ENCODE measurements at regions of chr9 and their contacts with region 1.

Region 1: DNA sequence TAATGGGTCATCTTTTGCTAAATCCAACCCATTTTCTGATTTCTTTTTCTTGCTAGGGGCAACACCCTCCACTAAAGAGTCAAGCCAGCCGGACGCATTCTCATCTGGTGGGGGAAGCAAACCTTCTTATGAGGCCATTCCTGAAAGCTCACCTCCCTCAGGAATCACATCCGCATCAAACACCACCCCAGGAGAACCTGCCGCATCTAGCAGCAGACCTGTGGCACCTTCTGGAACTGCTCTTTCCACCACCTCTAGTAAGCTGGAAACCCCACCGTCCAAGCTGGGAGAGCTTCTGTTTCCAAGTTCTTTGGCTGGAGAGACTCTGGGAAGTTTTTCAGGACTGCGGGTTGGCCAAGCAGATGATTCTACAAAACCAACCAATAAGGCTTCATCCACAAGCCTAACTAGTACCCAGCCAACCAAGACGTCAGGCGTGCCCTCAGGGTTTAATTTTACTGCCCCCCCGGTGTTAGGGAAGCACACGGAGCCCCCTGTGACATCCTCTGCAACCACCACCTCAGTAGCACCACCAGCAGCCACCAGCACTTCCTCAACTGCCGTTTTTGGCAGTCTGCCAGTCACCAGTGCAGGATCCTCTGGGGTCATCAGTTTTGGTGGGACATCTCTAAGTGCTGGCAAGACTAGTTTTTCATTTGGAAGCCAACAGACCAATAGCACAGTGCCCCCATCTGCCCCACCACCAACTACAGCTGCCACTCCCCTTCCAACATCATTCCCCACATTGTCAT is 72.0 kb downstream of the NUP214 start:
- DNase-seq: peak in 2 of 3 donors; percentile 76 to 78
- H3K4me3 ChIP-seq: no peak overlapping the region
- H3K27ac ChIP-seq: no peak overlapping the region
- H3K4me1 ChIP-seq: peaks cover 3 to 20% (median 14%) of the 10 kb centered on the region in 4 experiments
- H3K27me3 ChIP-seq: no peaks in the 10 kb centered on the region

Region 2: DNA sequence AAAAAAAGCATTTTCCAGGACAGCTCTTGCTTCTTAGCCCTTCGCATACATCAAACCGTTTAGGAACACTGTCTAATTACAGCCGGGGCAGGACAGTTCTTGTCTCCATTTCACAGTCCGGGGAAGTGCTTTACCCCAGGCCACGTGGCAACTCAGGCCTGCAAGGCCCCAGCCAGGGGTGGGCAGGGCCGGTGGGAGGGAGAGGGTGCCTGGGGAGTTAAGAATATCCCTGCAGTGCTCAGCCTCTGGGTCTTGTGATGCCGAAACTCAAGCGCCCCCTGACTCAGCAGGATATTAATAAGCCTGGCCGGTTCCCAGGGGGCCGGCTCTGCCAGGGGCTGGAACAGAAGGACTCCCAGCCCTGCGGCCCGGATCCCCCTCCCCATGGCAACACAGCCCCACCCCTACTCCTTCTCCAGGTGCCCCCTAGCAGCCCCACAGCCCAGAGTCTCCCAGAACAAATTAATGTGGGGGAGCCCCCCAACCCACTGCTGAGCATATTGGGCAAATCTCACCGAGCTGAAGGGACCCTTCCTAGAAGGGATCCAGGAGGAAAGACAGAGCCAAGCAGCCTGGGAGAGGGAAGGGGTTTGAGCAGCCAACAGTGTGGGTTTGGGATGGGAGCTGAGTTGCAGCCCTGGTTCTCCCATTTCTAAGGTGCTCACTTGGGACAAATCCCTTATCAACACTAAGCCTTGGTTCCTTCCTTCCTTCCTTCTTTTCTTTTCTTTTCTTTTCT is 137.5 kb after region 1 on chr9:
- CTCF ChIA-PET with region 1: interaction called, 16 read pairs
- POLR2A ChIA-PET with region 1: no interaction called
- DNase-seq: peak in 2 of 3 donors; percentile 66 to 81
- H3K4me3 ChIP-seq: peak overlapping the region in 1 of 7 experiments; percentile 11
- H3K27ac ChIP-seq: no peak overlapping the region
- H3K4me1 ChIP-seq: peaks cover 0 to 38% (median 23%) of the 10 kb centered on the region in 4 experiments
- H3K27me3 ChIP-seq: no peaks in the 10 kb centered on the region

Measured in common myeloid progenitor, CD34-positive (primary cell).